Sigmoid colon (tissue), 7 donors: ENCODE measurements at regions of chr2 and their contacts with region 1.

Region 1: DNA sequence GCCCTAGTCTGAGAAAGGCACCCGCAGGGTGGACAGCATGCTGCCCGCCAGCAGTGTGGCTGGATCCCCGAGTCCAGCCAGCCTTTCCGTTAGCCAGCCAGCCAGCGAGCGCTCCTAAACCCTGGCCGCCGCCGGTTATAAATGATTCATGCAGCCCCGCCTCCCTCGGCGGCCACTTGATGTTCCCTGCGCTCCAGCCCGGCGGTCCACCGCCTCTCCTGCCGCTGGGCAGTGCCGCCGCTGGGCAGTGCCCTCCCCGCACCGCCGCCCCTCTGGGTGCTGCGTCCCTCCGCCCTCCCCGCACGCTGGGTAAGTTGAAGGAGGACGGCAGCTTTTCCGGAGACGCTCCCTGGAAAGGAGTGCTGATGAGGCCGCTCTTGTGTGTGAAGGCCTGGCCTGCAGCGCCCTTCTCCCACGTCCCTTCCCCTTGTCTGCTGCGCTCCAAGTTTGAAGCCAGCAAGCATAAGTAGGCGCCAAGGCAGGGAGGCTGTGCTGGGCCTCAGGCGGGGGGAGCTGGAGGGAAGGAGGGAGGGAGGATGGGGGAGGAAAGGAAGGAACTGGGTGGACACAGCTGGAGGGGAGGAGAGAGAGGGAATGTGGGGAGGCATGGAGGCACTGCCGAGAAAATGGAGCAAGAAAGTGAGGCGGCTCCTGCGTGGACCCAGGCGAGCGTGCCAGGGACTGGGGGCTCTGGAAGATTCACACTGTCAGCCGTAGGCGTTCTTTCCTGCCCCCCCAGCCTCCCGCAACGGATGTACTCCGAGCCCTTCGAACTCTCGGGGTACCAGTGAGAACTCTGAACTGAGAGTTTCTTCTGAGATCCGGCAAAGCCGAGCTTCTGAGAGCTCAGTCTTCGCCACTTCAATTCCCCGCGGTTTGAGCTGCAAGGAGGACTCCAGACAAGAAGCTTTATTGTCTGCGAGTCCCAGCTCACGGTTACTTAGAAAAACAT is 131.9 kb downstream of the GLI2 start:
- DNase-seq: peak; percentile 93
- H3K4me3 ChIP-seq: peak overlapping the region; percentile 35 to 51 (median 46)
- H3K27ac ChIP-seq: peak overlapping the region; percentile 87 to 93 (median 90)
- H3K4me1 ChIP-seq: peaks cover 0 to 54% (median 44%) of the 10 kb centered on the region in 4 donors
- H3K27me3 ChIP-seq: no peaks in the 10 kb centered on the region
- CTCF ChIP-seq: no peak
- EP300 ChIP-seq: no peak
- POLR2A ChIP-seq: peak in 1 of 2 donors; percentile 18

Region 2: DNA sequence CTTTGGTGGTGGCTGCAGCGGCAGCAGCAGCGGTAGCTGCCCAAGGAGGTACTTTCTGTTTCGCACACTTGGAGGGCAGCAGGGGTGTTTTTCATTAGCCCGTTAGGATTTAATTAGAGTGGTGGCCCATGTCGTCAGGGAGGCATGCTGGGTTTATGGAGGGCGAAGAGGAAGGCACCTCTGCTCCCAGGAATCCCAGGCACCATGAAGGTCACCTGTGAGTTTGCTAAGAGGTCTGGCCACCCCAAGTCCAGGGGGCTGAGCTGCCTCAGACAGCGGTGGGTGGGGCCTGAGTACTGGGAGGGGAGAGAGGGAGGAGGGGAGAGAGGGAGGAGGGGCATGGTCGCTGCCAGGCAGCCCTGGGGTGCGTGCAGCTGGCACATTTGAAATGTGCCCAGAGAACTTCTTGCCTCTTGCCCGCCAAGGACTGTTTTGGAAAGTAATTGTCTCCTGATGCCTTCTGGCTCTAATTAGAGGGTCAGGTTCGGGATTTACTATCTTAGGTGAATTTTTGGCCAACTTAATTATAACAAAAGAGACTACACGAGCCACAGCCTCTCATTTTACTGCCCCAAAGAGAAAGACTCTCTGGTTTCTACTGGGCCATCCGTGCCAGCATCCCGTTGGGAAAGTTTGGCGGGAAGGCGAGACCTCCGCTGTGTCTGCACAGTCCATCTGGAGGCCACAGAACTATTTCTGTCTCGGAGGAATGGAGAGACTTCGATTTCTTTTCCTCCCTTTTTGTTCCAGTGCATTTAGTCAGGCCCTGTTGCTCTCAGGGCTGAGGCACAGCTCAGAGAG is 69.9 kb before region 1 on chr2:
- intact Hi-C with region 1: loop called (anchors 2 kb)
- DNase-seq: peak; percentile 87
- H3K4me3 ChIP-seq: peak overlapping the region in 2 of 4 donors; percentile 16 to 24
- H3K27ac ChIP-seq: peak overlapping the region; percentile 1 to 76 (median 72)
- H3K4me1 ChIP-seq: peaks cover 0 to 32% (median 29%) of the 10 kb centered on the region in 4 donors
- H3K27me3 ChIP-seq: no peaks in the 10 kb centered on the region
- CTCF ChIP-seq: no peak
- EP300 ChIP-seq: no peak
- POLR2A ChIP-seq: no peak

Region 3: DNA sequence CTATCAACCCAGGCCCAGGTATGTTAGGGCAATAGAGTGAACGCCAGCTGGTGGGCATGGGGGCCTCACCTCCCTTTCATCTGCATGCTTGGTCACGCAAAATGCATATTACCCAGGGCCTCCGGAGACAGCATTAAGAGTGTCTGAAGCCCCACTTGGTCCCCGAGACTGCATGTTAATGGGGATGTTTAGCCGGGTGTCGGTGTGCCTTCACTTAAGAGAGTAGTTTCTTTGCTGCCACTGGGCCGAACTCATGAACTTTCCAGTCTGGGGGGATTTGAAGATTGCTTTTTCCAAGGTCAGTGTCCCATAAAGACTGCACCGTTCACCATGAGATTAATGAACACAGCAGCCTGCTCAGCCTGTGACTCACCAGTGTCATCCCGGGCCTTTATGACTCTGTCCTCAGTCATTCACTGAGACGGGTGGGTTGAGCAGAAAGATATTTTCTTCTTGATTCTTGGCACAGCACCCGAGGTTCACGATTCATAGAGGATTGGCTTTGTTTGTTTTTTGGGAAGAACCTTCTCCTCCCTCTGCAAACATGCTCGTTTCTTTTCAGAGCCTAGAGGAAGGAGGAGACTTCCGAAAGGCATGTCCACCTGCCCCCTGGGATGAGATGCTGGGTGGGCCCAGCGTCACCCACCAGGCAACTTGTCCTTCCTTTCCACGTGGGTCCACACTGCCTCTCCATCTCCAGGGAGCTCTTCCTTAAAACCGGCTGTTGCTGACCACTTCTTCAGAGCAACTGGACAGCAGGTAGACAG is 67.2 kb after region 1 on chr2:
- intact Hi-C with region 1: loop called (anchors 5 kb)
- DNase-seq: no peak
- H3K4me3 ChIP-seq: no peak overlapping the region
- H3K27ac ChIP-seq: peak overlapping the region; percentile 76 to 81 (median 79)
- H3K4me1 ChIP-seq: peaks cover 0 to 60% (median 58%) of the 10 kb centered on the region in 4 donors
- H3K27me3 ChIP-seq: no peaks in the 10 kb centered on the region
- CTCF ChIP-seq: no peak
- EP300 ChIP-seq: no peak
- POLR2A ChIP-seq: no peak

Region 4: GRCh38 chr2:120958623-120959366 is 91.2 kb after region 1 on chr2:
- intact Hi-C with region 1: no loop called
- DNase-seq: no peak
- H3K4me3 ChIP-seq: no peak overlapping the region
- H3K27ac ChIP-seq: peak overlapping the region in 2 of 4 donors; percentile 36 to 55
- H3K4me1 ChIP-seq: peaks cover 0 to 17% (median 16%) of the 10 kb centered on the region in 4 donors
- H3K27me3 ChIP-seq: no peaks in the 10 kb centered on the region
- CTCF ChIP-seq: peak in 1 of 4 experiments; percentile 12
- EP300 ChIP-seq: no peak
- POLR2A ChIP-seq: no peak

Region 5: GRCh38 chr2:121076885-121077549 is 209.5 kb after region 1 on chr2:
- intact Hi-C with region 1: loop called (anchors 5 kb)
- DNase-seq: no peak
- H3K4me3 ChIP-seq: no peak overlapping the region
- H3K27ac ChIP-seq: no peak overlapping the region
- H3K4me1 ChIP-seq: peaks cover 0 to 41% (median 29%) of the 10 kb centered on the region in 4 donors
- H3K27me3 ChIP-seq: peaks cover 0 to 7% (median 0%) of the 10 kb centered on the region in 3 donors
- CTCF ChIP-seq: peak in 3 of 4 experiments; percentile 55 to 78 (median 66)
- EP300 ChIP-seq: no peak
- POLR2A ChIP-seq: no peak

Region 6: DNA sequence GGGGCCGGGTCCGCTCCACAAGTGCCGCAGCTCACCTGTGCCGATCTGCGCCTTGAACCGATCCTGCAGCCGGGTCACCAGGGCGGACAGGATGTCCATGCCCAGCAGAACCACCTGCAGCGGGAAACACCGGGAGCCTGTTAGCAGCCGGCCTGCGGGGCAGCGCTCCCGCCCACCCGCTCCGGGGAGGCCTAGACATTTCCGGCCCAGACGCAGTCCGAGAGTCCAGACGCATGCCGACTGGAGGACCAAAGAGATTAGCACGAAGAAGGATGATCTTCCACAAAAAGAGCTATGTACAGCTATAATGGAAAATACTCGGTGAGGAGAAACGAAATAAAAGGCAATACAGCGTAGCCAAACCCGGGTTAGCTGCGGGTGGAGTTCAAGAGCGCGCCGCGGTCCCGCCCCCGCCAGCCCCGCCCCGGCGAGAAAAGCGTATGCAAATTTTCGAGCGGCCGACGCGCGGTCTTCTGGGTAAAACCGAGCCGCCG is 662.7 kb after region 1 on chr2:
- intact Hi-C with region 1: no loop called
- DNase-seq: peak; percentile 90
- H3K4me3 ChIP-seq: peak overlapping the region; percentile 59 to 82 (median 73)
- H3K27ac ChIP-seq: peak overlapping the region; percentile 87 to 96 (median 94)
- H3K4me1 ChIP-seq: peaks cover 0 to 50% (median 33%) of the 10 kb centered on the region in 4 donors
- H3K27me3 ChIP-seq: no peaks in the 10 kb centered on the region
- CTCF ChIP-seq: no peak
- EP300 ChIP-seq: no peak
- POLR2A ChIP-seq: no peak